Thyroid gland (tissue), 4 donors: ENCODE measurements at regions of chr16 and their contacts with region 1.

Region 1: DNA sequence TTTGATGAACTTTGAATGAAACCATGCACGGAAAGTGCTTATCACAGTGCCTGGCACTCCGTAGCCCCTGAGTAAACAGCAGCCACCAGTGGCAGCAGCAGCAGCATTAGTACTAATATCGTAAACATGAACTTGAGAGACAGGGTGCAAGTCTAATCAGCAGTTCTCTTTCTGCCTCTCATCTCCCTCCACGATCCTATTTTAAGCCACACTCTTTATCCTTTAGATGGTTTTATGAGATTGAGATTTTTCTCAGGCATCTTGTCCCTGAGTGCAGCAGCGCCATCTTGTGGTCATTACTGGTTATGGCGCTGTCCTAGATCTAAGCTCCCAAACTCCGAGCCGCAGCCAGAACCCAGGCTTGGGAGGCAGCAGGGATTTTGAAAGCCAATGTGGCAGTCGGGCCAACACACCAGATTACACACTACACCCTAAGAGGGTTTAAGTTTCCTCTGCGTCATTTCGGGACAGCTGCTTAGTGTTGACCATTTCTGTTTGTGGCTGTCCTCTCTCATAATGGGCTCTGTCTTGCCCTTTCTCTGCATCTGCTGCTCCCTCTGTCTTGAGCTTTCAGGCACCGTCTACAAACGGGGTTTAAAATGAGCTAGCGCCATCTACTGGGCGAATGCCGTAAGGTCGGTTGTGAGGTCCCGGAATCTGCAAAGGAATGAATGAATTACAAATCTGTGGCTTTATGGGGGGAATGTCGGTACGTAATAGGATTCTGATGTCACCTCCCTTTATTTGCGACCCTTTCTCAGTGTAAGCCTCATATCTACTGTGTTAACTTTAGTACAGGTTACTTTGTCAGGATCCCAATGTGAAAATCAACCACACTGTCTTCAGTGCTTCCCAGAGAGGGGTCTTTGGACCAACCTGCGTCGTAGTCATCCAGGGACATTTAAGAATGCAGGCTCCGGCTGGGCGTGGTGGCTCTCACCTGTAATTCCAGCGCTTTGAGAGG is 64.5 kb downstream of the CYLD start:
- DNase-seq: peak; percentile 87
- H3K4me3 ChIP-seq: no peak overlapping the region
- H3K27ac ChIP-seq: peak overlapping the region in 2 of 3 donors; percentile 35 to 59
- H3K4me1 ChIP-seq: peaks cover 0 to 4% of the 10 kb centered on the region in 2 donors
- H3K27me3 ChIP-seq: no peaks in the 10 kb centered on the region
- CTCF ChIP-seq: peak; percentile 67 to 98 (median 92)
- POLR2A ChIP-seq: no peak

Region 2: DNA sequence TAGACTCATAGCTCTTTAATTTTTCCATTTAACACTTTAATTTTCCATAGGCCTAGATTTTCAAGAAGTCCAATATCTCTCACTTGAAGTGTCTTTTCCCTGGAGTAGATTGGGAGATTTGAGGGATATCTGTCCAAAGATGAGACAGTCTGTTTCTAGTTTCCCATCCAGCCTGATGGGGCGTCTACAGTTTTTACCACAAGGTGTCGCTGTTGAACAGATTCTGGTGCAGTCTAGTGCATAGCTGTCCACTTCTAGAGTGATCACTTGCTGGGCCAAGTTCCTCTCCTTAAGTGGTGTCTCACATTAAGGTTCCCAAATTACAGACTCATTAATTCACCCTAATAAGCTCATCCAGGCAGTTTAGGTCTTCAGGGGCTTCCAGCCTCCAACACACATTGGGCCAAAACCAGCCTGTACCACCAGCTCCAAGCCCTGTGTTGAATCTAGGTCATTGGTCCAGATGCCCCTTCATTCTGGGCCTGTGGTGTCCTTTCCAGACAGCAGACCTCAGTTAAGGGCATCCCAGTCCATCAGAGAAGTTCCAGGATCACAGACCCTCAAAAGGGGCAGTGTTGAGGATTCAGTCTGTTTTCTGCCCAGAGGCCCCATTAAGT is 134.6 kb before region 1 on chr16:
- intact Hi-C with region 1: loop called (anchors 10 kb)
- DNase-seq: no peak
- H3K4me3 ChIP-seq: no peak overlapping the region
- H3K27ac ChIP-seq: no peak overlapping the region
- H3K4me1 ChIP-seq: no peaks in the 10 kb centered on the region
- H3K27me3 ChIP-seq: no peaks in the 10 kb centered on the region
- CTCF ChIP-seq: peak in 1 of 6 experiments; percentile 26
- POLR2A ChIP-seq: no peak

Region 3: GRCh38 chr16:50696575-50697420 is 109.6 kb before region 1 on chr16:
- intact Hi-C with region 1: no loop called
- DNase-seq: peak; percentile 52
- H3K4me3 ChIP-seq: no peak overlapping the region
- H3K27ac ChIP-seq: peak overlapping the region in 1 of 3 donors; percentile 44
- H3K4me1 ChIP-seq: peaks cover 3 to 20% of the 10 kb centered on the region in 2 donors
- H3K27me3 ChIP-seq: no peaks in the 10 kb centered on the region
- CTCF ChIP-seq: no peak
- POLR2A ChIP-seq: no peak